Activated CD4-positive, alpha-beta T cell treated with anti-CD3 and anti-CD28 coated beads, Interleukin-2, amount 10 ng/mL, durations not matched to agents 24 days and 14 days (primary cell): ENCODE measurements at regions of chr3 and their contacts with region 1.

Region 1: GRCh38 chr3:105518806-105519418 is 152.2 kb downstream of the ALCAM start:
- DNase-seq: peak; percentile 75
- H3K4me3 Mint-ChIP-seq: no peak overlapping the region
- H3K27ac Mint-ChIP-seq: no peak overlapping the region
- H3K4me1 Mint-ChIP-seq: peaks cover 3% of the 10 kb centered on the region
- H3K27me3 Mint-ChIP-seq: no peaks in the 10 kb centered on the region

Region 2: GRCh38 chr3:104564045-104564643 is 954.8 kb before region 1 on chr3:
- intact Hi-C with region 1: loop called (anchors 2 kb)
- DNase-seq: peak; percentile 85
- H3K4me3 Mint-ChIP-seq: no peak overlapping the region
- H3K27ac Mint-ChIP-seq: no peak overlapping the region
- H3K4me1 Mint-ChIP-seq: no peaks in the 10 kb centered on the region
- H3K27me3 Mint-ChIP-seq: no peaks in the 10 kb centered on the region